SK-N-SH (cell line): ENCODE measurements at regions of chr11 and their contacts with region 1.

Region 1: GRCh38 chr11:18540207-18541009 is 13.7 kb upstream of the TSG101 start:
- DNase-seq: peak; percentile 28
- H3K4me3 ChIP-seq: no peak overlapping the region
- H3K27ac ChIP-seq: no peak overlapping the region
- H3K4me1 ChIP-seq: no peaks in the 10 kb centered on the region
- H3K27me3 ChIP-seq: no peaks in the 10 kb centered on the region
- CTCF ChIP-seq: peak; percentile 61
- EP300 ChIP-seq: no peak
- RAD21 ChIP-seq: peak; percentile 67

Region 2: GRCh38 chr11:18731949-18732821 is 191.8 kb after region 1 on chr11:
- CTCF ChIA-PET with region 1: interaction called, 26 read pairs
- POLR2A ChIA-PET with region 1: no interaction called
- DNase-seq: peak; percentile 86
- H3K4me3 ChIP-seq: no peak overlapping the region
- H3K27ac ChIP-seq: no peak overlapping the region
- H3K4me1 ChIP-seq: no peaks in the 10 kb centered on the region; a peak in 1 of 4 replicates
- H3K27me3 ChIP-seq: no peaks in the 10 kb centered on the region
- CTCF ChIP-seq: peak; percentile 98
- EP300 ChIP-seq: no peak
- RAD21 ChIP-seq: peak; percentile 84

Region 3: GRCh38 chr11:18768472-18768901 is 228.1 kb after region 1 on chr11:
- CTCF ChIA-PET with region 1: interaction called, 19 read pairs
- POLR2A ChIA-PET with region 1: no interaction called
- DNase-seq: no peak
- H3K4me3 ChIP-seq: no peak overlapping the region
- H3K27ac ChIP-seq: no peak overlapping the region
- H3K4me1 ChIP-seq: 0 out of 4 replicates have a peak, but pooled peaks cover 0 to under 1% of the 10 kb centered on the region in 2 experiments
- H3K27me3 ChIP-seq: no peaks in the 10 kb centered on the region
- CTCF ChIP-seq: no peak
- EP300 ChIP-seq: no peak
- RAD21 ChIP-seq: no peak